ENCODE measurements at regions of chr12 and their contacts with region 1.

Region 1: DNA sequence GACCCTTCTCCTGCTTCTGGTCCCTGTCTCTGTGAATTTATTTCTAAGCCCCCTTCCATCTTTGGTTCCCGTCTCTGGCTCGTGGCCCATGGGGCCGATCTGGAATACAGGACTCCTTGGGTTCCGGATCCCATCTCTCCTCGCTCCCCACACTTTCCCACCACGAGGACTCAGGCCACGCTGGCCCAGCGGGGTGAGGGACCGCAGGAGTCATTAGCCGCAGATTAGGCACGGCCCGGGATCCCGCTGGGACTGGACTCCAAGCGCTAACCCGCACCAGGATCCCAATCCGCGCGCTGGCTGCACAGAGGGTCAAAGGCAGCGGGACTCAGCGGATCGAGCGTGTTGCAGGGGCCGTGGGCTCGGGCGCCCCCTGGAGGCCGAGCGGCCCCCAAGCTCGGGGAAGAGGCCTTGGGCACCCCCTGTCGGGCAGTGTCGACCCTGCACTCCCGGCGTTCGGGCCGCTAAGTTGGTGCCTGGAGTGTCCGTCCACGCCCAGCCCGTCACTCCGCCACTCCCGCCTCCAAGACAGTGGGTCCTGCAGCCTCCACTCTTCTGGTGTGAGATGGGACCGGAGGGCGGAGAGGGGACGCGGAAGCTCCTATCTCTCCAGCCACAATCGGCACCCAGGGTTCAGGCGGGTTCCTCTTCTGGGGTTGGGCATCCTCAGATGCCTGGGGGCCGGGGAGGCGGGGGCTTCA is 9.5 kb downstream of the SHMT2 start:
- DNase-seq: peak; percentile 89
- H3K4me3 ChIP-seq: peak overlapping the region; percentile 35
- H3K27ac ChIP-seq: no peak overlapping the region
- H3K4me1 ChIP-seq: peaks cover 39% of the 10 kb centered on the region
- H3K27me3 ChIP-seq: peaks cover 74% of the 10 kb centered on the region
- CTCF ChIP-seq: peak; percentile 100

Region 2: DNA sequence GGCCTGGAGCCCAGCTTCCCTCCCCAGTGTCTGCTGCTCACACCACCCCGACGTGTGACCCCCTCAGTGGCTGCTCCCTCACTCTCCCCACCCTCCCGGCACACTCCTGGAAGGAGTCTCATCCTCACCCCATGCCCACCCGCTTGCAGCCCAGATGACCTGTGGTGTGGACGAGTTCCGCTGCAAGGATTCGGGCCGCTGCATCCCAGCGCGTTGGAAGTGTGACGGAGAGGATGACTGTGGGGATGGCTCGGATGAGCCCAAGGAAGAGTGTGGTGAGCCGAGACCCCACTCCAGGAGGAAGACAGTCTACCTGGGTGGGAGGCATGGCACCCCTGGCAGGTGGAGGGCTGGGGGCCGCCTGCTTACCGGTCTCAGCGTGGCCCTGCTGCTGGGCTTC is 37.4 kb before region 1 on chr12:
- intact Hi-C with region 1: no loop called
- DNase-seq: no peak
- H3K4me3 ChIP-seq: no peak overlapping the region
- H3K27ac ChIP-seq: no peak overlapping the region
- H3K4me1 ChIP-seq: no peaks in the 10 kb centered on the region
- H3K27me3 ChIP-seq: no peaks in the 10 kb centered on the region
- CTCF ChIP-seq: no peak

Region 3: GRCh38 chr12:57213058-57213715 is 25.8 kb before region 1 on chr12:
- intact Hi-C with region 1: loop called (anchors 2 kb)
- DNase-seq: peak; percentile 88
- H3K4me3 ChIP-seq: no peak overlapping the region
- H3K27ac ChIP-seq: no peak overlapping the region
- H3K4me1 ChIP-seq: peaks cover 15% of the 10 kb centered on the region
- H3K27me3 ChIP-seq: peaks cover 37% of the 10 kb centered on the region
- CTCF ChIP-seq: peak; percentile 97

Measured in colonic mucosa (tissue), 4 donors.